Aorta (tissue), 5 donors: ENCODE measurements at regions of chr5 and their contacts with region 1.

Region 1: GRCh38 chr5:31581498-31582099 is 49.5 kb downstream of the C5orf22 start:
- DNase-seq: no peak
- ATAC-seq: peak; percentile 54
- H3K4me3 ChIP-seq: no peak overlapping the region
- H3K27ac ChIP-seq: no peak overlapping the region
- H3K4me1 ChIP-seq: no peaks in the 10 kb centered on the region
- H3K27me3 ChIP-seq: no peaks in the 10 kb centered on the region

Region 2: GRCh38 chr5:31809050-31809870 is 227.7 kb after region 1 on chr5:
- intact Hi-C with region 1: loop called (anchors 1 to 2 kb)
- DNase-seq: peak; percentile 65 to 84
- ATAC-seq: peak; percentile 89
- H3K4me3 ChIP-seq: no peak overlapping the region
- H3K27ac ChIP-seq: no peak overlapping the region
- H3K4me1 ChIP-seq: no peaks in the 10 kb centered on the region
- H3K27me3 ChIP-seq: no peaks in the 10 kb centered on the region

Region 3: GRCh38 chr5:32076699-32077695 is 495.4 kb after region 1 on chr5:
- intact Hi-C with region 1: loop called (anchors 5 to 10 kb)
- DNase-seq: no peak
- ATAC-seq: no peak
- H3K4me3 ChIP-seq: no peak overlapping the region
- H3K27ac ChIP-seq: no peak overlapping the region
- H3K4me1 ChIP-seq: no peaks in the 10 kb centered on the region
- H3K27me3 ChIP-seq: no peaks in the 10 kb centered on the region

Region 4: DNA sequence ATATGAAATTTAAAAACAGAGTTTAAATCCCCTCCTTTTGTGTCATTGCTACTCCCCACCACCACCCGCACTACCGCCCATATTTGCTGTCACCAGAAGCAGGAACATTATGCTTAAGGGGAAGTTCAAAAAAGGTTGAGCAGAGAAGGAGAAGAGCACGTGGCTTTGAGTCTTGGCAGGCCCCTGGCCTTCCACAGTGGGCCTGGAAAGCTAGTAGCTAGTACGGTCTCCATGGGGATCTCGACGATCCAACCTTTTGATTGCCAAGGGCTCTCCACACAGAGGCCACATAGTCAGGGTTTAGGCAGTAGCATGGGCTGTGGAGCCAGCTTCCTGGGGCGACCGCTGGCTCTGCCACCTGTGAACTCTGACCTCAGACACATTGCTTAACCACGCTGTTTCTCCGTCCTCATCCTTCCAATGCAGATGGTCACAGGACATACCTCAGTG is 502.4 kb after region 1 on chr5:
- intact Hi-C with region 1: loop called (anchors 5 to 10 kb)
- DNase-seq: no peak
- ATAC-seq: peak; percentile 39
- H3K4me3 ChIP-seq: no peak overlapping the region
- H3K27ac ChIP-seq: no peak overlapping the region
- H3K4me1 ChIP-seq: no peaks in the 10 kb centered on the region
- H3K27me3 ChIP-seq: no peaks in the 10 kb centered on the region